ENCODE measurements at regions of chr15 and their contacts with region 1.

Region 1: DNA sequence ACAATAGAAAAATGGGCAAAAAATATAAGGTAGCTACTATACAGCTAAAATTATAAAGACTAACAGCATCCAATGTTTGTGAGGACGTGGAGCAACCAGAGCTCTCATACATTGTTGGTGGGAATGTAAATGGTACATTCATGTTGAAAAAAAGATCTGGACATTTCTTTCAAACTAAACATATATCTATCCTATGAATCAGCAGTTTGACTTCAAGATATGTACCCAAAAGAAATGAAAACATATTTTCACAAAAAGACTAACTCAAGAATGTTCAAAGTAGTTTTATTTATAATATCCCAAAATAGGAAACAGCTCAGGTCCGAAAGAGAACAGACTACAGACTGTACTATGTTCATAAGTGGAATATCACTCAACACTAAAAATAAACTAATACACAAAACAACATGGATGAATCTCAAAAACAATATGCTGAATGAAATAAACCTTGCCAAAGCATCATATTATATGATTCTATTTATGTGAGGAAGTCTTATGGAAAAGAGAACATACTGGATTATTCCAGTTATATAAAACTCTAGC is 8.8 kb upstream of the TTBK2 start:
- DNase-seq: no peak
- ATAC-seq: no peak
- H3K4me3 ChIP-seq: no peak overlapping the region
- H3K27ac ChIP-seq: no peak overlapping the region
- H3K4me1 ChIP-seq: no peaks in the 10 kb centered on the region
- H3K27me3 ChIP-seq: no peaks in the 10 kb centered on the region
- CTCF ChIP-seq: no peak

Region 2: GRCh38 chr15:42670451-42670850 is 258.9 kb before region 1 on chr15:
- intact Hi-C with region 1: no loop called
- DNase-seq: no peak
- ATAC-seq: no peak
- H3K4me3 ChIP-seq: no peak overlapping the region
- H3K27ac ChIP-seq: no peak overlapping the region
- H3K4me1 ChIP-seq: no peaks in the 10 kb centered on the region
- H3K27me3 ChIP-seq: no peaks in the 10 kb centered on the region
- CTCF ChIP-seq: no peak

Region 3: DNA sequence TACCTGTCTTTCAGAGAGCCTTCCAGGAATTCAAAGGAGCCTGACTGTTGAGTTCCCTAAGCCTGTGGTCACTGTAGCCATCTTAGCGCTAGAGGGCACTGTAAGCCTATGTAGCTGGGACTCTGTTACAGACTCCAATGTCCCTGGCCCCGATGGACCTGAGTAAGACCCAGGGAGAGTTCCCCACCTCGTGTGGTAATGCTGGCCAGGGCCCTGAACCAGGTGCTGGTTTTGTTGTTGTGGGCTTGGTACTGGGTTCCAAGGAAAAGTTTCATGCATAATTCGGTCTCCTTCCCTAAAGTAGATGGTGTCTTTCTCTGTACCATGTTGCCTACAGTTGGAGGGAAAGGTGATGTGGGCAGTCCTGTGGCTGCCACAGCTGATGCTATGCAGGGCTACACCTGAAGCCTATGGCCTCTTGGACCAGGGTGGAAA is 224.9 kb before region 1 on chr15:
- intact Hi-C with region 1: loop called in 2 of 3 experiments (anchors 5 kb)
- DNase-seq: peak in 5 of 6 donors; percentile 51 to 81 (median 59)
- ATAC-seq: peak; percentile 95 to 99 (median 98)
- H3K4me3 ChIP-seq: no peak overlapping the region
- H3K27ac ChIP-seq: no peak overlapping the region
- H3K4me1 ChIP-seq: peaks cover 0 to 6% (median 0%) of the 10 kb centered on the region in 3 donors
- H3K27me3 ChIP-seq: no peaks in the 10 kb centered on the region
- CTCF ChIP-seq: peak; percentile 64 to 87 (median 75)

Region 4: DNA sequence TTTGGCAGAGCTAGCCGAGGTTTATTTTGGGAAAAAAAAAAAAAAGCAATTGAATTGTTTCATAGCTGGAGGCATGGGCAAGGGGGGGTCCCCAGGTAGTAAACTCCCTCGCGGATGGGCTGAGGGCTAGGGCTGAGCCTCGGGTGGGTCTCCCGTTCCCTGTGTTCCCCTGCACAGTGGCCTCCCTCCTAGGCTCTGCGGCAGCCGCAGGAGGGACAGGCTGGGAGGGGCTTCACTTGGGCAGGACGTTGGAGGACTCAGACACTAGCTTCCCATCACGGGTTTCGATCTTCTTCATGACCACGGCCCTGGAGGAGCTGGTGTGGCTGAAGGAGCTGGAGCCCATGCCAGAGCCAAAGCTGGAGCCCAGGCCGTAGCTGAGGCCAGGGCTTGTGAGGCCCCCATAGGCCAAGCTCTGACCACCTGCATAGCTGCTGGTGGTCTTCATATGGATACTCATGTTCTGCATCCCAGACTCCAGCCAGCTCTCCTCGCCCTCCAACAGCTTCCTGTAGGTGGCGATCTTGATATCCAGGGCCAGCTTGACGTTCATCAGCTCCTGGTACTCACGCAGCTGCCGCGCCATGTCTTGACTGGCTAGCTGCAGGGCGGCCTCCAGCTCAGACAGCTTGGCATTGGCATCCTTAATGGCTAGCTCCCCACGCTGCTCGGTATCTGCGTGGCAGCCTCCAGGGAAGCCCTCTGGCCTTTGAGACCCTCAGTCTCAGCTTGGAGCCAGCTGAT is 128.5 kb before region 1 on chr15:
- intact Hi-C with region 1: no loop called
- DNase-seq: peak in 1 of 6 donors; percentile 27
- ATAC-seq: no peak
- H3K4me3 ChIP-seq: no peak overlapping the region
- H3K27ac ChIP-seq: no peak overlapping the region
- H3K4me1 ChIP-seq: no peaks in the 10 kb centered on the region
- H3K27me3 ChIP-seq: no peaks in the 10 kb centered on the region
- CTCF ChIP-seq: no peak

Region 5: DNA sequence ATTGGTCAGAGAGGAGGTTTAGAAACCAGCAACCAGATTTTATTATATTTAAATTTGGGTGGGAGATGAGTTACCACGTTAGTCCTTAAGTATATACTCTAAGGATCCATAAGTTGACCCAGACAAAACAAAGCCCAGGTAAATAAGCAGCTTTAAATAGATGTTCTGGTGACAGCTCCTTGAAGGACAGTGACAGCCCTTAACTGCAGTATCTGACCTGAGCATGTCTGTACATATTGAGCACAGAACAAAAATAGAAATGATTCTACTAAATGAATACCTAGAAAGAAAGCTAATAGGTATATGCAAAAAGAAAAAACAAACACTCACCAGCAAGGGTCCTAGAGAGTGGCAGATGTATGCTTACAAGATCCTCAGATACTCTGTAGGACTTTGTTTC is 113.5 kb after region 1 on chr15:
- intact Hi-C with region 1: no loop called
- DNase-seq: no peak
- ATAC-seq: no peak
- H3K4me3 ChIP-seq: no peak overlapping the region
- H3K27ac ChIP-seq: no peak overlapping the region
- H3K4me1 ChIP-seq: no peaks in the 10 kb centered on the region
- H3K27me3 ChIP-seq: no peaks in the 10 kb centered on the region
- CTCF ChIP-seq: no peak